ENCODE measurements at regions of chr5 and their contacts with region 1.

Region 1: DNA sequence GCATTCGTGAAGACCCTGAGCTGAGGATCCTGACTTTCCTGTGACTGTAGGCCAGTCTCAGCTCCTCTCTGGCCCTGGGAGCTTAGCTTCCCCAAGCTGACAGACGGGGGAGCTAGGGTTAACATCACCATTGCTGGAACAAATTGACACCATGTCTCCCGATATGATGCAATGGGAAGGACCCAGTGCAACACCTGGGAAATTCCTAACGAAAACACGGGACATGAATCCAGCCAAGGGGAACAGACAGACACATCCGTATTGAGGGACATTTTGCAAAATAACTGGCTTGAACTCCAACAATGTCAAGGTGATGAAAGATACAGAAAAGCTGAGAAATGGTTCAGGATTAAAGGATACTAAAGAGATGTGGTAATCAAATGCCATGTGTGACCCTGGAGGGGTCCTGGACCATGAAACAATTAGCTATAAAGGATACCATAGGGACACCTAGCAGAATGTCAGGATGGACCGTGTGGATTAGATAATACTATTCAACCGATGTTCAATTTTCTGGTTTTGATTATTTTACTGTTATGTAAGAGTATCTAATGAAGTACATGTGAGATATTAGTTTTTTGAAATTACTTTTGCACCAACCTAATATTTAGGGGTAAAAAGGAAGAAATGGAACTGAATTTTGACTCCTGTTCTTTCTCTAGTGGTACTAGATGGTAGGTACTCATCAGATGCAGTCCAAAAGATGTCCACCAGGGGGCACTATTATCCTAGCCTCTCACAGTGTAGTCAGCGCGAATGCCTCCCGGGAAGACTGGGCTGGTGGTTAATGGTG is 52.7 kb downstream of the NDST1 start:
- DNase-seq: peak; percentile 94
- H3K27ac ChIP-seq: 0 out of 2 replicates have a peak overlapping the region, but pooled peaks have one; percentile 24
- CTCF ChIP-seq: peak; percentile 91

Region 2: DNA sequence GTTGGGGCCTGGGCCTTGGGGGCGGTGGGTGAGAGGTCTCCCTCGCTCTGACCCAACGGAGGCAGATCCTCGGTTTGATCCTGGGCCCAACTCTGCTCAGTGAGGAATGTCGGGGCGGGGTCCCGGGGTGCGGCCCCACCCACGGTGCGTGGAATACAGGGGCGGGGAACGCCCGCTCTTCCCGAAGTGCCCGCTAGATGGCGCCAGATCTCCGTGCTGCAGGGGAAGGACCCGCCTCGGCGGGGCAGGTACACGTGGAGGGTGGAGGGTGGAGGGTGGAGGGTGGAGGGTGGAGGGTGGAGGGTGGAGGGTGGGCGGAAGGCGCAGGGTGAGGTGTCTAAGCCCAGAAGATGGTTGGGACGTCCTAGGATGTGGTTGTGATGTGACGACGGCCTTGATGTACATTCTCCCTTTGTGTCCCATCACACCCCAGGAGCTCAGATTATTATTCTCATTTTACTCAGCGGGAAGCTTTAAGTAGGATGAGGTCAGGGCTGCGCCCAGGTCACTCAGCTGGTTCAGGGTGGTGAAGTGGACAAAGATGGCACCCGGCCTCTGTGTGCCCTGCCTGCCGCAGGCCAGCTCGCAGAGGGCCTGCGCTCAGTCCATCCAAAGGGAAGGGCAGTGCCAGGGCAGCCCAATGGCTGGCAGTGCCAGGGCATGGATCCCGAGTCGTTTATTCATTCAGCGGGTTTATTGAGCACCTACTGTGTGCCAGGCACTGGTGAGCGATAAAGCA is 101.6 kb before region 1 on chr5:
- CTCF ChIA-PET with region 1: interaction called, 11 read pairs
- POLR2A ChIA-PET with region 1: interaction called, 4 read pairs
- DNase-seq: peak; percentile 93
- H3K27ac ChIP-seq: peak overlapping the region; percentile 64
- CTCF ChIP-seq: peak; percentile 85

Region 3: GRCh38 chr5:150571836-150572235 is 11.2 kb after region 1 on chr5:
- CTCF ChIA-PET with region 1: no interaction called
- POLR2A ChIA-PET with region 1: no interaction called
- DNase-seq: no peak
- H3K27ac ChIP-seq: no peak overlapping the region
- CTCF ChIP-seq: no peak

Region 4: DNA sequence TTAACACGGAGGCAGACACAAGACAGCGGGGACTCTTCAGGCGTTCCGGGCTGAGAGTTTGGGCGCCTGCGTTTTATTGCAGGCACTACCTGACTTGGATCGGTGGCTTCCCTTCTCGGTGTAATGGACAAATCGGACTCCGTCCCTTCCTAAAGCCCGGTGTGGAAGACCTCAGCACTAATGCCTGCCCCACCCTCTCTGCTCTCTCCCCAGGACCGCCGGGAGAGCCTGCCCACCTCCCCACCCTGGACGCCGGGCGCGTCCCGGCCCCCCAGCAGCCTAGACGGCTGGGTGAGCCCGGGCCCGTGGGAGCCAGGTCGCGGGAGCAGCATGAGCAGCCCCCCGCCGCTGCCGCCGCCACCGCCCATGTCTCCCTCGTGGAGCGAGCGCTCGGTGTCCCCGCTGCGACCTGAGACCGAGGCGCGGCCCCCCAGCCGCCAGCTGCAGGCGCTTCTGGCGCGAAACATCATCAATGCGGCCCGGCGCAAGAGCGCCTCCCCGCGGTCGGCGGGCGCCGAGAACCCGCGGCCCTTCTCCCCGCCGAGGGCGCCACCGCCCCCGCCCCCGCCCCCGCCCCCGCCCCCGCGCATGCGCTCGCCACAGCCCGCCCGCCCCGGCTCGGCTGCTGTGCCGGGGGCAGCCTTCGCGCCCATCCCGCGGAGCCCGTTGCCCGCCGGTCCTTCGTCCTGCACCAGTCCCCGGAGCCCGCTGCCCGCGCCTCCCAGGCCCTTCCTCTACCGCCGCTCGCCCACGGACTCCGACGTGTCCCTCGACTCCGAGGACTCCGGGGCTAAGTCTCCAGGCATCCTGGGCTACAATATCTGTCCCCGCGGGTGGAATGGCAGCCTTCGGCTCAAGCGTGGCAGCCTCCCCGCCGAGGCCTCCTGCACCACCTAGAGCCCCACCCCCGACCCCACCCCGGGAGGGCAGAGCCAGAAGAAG is 95.9 kb after region 1 on chr5:
- CTCF ChIA-PET with region 1: interaction called, 47 read pairs
- POLR2A ChIA-PET with region 1: no interaction called
- DNase-seq: peak; percentile 92
- H3K27ac ChIP-seq: peak overlapping the region; percentile 54
- CTCF ChIP-seq: peak; percentile 92

Region 5: DNA sequence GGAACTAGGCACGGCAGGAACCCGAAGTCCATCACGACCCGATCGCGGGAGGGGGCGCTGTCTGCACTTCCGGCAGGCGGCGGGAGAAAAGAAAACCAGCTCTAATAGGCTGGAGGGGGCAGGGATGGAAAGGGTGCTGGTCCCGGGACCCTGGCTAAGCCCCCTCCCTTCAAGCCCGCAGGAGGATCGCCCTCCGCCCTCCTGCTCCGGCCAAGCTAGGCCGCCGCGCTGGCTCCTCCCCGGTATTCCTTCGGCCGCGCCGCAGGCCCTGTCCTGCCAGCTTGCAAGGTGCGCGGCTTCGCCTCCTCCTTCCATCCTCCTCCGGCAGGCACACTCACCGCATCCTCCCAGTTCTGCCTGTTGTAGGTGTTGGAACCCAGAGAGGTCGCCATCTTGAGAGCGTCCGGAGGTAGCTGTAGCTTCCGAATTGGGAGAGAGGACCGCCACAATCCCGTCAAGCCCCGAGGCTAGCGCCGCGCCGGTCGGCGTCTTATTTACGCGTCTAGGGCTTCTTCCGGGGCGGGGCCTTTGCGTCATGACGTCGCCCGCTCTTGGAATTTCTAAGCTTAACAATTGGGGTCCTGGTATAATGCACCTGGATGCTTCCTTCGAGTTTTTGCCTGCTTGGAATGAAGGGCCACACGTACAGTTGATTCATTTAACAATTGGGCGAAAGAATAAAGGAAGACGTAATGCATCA is 140.1 kb after region 1 on chr5 and contains the start of gene RBM22:
- CTCF ChIA-PET with region 1: interaction called, 21 read pairs
- POLR2A ChIA-PET with region 1: interaction called, 6 read pairs
- DNase-seq: peak; percentile 89
- H3K27ac ChIP-seq: peak within 1 kb of the TSS; percentile 89
- CTCF ChIP-seq: peak; percentile 84

Region 6: GRCh38 chr5:150846654-150847333 is 286.2 kb after region 1 on chr5:
- CTCF ChIA-PET with region 1: interaction called, 11 read pairs
- POLR2A ChIA-PET with region 1: no interaction called
- DNase-seq: peak; percentile 86
- H3K27ac ChIP-seq: no peak overlapping the region
- CTCF ChIP-seq: peak; percentile 87